Ovary (tissue), 10 donors: ENCODE measurements at regions of chr9 and their contacts with region 1.

Region 1: DNA sequence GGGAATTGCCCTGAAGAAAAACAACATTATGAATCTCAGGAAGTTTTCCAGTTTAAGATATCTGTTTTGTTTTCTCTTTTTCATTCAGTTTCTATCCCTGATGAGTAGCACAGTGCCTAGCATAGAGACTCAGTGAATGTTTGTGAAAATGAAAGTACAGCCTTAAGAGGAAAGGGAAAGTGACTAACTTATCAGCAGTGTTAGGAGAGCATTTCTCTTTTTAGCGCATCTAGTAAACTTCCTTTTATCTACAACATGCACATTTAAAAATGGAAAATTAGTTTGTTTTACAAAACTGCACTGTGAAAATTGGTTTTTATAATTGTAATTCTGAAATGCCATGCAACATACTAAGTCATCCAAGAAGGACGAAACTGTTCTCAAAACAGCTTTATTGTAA is 110.8 kb downstream of the SMARCA2 start:
- DNase-seq: no peak
- H3K4me3 ChIP-seq: peak overlapping the region; percentile 3
- H3K27ac ChIP-seq: peak overlapping the region; percentile 36 to 91
- H3K4me1 ChIP-seq: peaks cover 29% of the 10 kb centered on the region
- H3K27me3 ChIP-seq: no peaks in the 10 kb centered on the region
- CTCF ChIP-seq: no peak
- EP300 ChIP-seq: no peak
- POLR2A ChIP-seq: no peak

Region 2: GRCh38 chr9:751137-752051 is 1374.5 kb before region 1 on chr9:
- intact Hi-C with region 1: no loop called
- DNase-seq: no peak
- H3K4me3 ChIP-seq: no peak overlapping the region
- H3K27ac ChIP-seq: no peak overlapping the region
- H3K4me1 ChIP-seq: no peaks in the 10 kb centered on the region
- H3K27me3 ChIP-seq: no peaks in the 10 kb centered on the region
- CTCF ChIP-seq: no peak
- EP300 ChIP-seq: no peak
- POLR2A ChIP-seq: no peak

Region 3: DNA sequence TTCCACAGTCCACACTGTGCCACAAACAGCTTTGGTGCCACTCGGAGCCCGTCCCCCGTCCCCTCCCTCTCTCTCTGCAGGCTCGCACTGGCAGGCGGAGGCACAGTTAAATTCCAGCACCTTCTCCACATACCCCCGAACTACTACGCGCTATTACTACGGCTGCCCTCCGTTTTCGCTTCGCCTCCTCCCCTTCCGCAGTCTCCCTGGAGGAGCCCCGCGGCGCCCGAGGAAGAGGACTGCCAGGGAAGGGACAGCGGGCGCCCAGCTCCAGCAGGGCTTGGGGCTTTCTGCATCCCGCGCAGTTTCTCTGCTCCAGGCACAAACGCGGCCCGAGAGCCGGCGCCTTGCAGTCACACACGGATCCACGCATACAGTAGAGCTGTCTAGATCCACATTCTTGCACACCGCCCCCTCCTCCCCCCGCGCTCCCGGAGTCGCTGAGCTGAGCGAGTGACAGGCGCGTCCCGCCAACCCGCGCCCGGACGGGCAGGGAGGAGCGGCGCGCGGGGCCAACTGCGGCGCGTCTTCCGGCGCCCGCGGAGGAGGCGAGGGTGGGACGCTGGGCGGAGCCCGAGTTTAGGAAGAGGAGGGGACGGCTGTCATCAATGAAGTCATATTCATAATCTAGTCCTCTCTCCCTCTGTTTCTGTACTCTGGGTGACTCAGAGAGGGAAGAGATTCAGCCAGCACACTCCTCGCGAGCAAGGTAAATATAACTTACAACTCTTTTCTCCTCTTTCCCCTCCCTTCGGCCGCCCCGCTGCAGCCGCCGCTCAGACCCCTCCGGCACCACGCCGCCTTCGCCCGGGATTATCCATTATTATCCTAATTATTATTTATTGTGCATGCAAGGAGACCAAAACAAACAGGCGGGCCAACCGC is 111.0 kb before region 1 on chr9 and contains the start of gene SMARCA2:
- intact Hi-C with region 1: loop called in 1 of 4 experiments (anchors 10 kb)
- DNase-seq: peak; percentile 97 to 98 (median 98)
- H3K4me3 ChIP-seq: peak within 1 kb of the TSS; percentile 69
- H3K27ac ChIP-seq: peak within 1 kb of the TSS; percentile 85 to 98
- H3K4me1 ChIP-seq: peaks cover 2% of the 10 kb centered on the region
- H3K27me3 ChIP-seq: no peaks in the 10 kb centered on the region
- CTCF ChIP-seq: no peak
- EP300 ChIP-seq: no peak
- POLR2A ChIP-seq: peak; percentile 84
- total RNA-seq, gene SMARCA2: 153 to 404 (median 199) TPM

Region 4: DNA sequence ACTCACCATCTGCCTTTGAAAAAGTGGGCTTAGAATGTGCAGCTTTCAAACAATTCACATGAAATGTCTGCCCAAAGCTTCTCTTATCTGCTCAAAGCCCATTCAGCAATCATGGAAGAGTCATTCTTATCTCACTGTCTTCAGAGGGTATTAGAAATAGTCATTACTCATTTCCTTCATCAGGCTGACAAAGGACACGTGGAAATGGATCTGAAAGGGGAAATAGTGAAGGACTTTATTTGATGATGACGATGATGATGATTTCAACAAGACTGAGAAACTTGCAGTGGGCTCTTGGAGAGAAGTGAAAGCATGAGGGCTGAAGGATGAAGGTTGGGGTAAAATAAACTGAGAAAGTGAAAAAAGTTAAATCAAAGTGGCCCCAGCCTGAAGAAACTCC is 83.5 kb after region 1 on chr9:
- intact Hi-C with region 1: no loop called
- DNase-seq: no peak
- H3K4me3 ChIP-seq: no peak overlapping the region
- H3K27ac ChIP-seq: no peak overlapping the region
- H3K4me1 ChIP-seq: no peaks in the 10 kb centered on the region
- H3K27me3 ChIP-seq: no peaks in the 10 kb centered on the region
- CTCF ChIP-seq: no peak
- EP300 ChIP-seq: no peak
- POLR2A ChIP-seq: no peak